ENCODE measurements at regions of chr3 and their contacts with region 1.

Region 1: DNA sequence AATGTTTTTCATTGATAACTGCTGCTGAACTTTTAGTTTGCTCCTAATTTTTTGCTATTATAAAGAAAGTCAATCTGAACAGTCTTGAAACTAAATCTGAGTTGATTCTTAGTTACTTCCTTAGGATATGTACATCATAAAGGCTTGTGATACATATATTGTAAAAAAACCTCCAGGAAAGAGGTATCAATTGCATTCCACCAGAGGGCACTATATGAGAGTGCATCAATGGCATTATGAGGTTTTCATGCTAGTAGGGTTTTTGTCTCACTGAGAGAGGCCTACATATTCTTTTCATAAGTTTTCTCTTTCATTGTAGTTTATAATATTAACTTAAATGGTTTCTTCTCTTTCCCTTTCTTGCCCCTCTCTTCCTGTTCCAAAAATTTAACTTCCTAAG is 46.9 kb downstream of the PIK3R4 start:
- DNase-seq: peak; percentile 44
- H3K4me3 Mint-ChIP-seq: no peak overlapping the region
- H3K27ac Mint-ChIP-seq: no peak overlapping the region
- H3K4me1 Mint-ChIP-seq: no peaks in the 10 kb centered on the region
- H3K27me3 Mint-ChIP-seq: no peaks in the 10 kb centered on the region
- CTCF ChIP-seq: peak; percentile 77

Region 2: DNA sequence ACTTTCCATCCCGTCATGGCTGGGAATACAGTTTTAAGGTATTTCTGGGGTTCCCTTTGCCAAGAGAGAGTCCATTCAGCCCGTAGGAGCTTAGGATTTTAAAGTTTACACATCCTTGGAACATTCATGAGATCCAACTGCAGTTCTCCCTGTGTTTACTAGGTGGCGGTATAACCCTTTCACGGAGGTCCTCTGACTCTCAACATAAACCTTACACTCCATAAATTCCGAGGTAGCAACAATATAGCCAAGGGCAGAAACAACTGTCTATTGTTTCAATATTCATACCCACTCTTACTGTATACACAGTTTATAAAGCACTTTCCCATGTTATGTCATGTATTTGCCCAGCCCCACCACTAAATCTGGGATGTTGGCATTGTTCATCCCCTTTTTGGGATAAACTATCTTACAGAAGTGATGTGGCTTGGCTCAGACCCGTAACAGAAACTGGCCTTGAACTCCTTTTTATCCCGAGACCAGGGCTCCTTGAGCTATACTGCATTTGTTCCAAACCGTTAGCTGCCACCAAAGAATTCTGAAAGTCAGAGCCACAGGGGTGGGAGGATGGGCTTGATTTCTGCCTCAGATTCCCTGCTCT is 423.5 kb before region 1 on chr3:
- CTCF ChIA-PET with region 1: no interaction called
- intact Hi-C with region 1: loop called (anchors 5 kb)
- DNase-seq: peak; percentile 50
- H3K4me3 Mint-ChIP-seq: no peak overlapping the region
- H3K27ac Mint-ChIP-seq: no peak overlapping the region
- H3K4me1 Mint-ChIP-seq: no peaks in the 10 kb centered on the region
- H3K27me3 Mint-ChIP-seq: peaks cover 54% of the 10 kb centered on the region
- CTCF ChIP-seq: peak; percentile 88

Region 3: GRCh38 chr3:130779031-130779430 is 79.3 kb after region 1 on chr3:
- CTCF ChIA-PET with region 1: no interaction called
- intact Hi-C with region 1: no loop called
- DNase-seq: no peak
- H3K4me3 Mint-ChIP-seq: no peak overlapping the region
- H3K27ac Mint-ChIP-seq: no peak overlapping the region
- H3K4me1 Mint-ChIP-seq: peaks cover 38% of the 10 kb centered on the region
- H3K27me3 Mint-ChIP-seq: no peaks in the 10 kb centered on the region
- CTCF ChIP-seq: no peak

Region 4: DNA sequence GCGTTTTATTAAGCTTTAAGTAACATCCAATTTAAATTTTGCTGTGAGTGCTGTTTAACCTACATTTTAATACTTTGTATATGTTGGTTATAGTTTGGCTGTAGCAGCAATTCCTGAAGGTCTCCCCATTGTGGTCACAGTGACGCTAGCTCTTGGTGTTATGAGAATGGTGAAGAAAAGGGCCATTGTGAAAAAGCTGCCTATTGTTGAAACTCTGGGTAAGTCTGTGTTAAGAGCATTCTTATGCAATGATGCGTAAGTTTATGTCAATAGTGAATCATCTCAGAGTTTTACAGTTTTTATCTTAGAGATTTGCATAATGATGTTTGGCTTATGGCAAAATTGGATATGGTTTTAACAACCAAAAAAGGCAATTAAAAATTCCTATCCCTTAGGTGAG is 264.1 kb after region 1 on chr3:
- CTCF ChIA-PET with region 1: no interaction called
- intact Hi-C with region 1: loop called (anchors 5 kb)
- DNase-seq: peak; percentile 72
- H3K4me3 Mint-ChIP-seq: peak overlapping the region; percentile 5
- H3K27ac Mint-ChIP-seq: peak overlapping the region; percentile 94
- H3K4me1 Mint-ChIP-seq: peaks cover 62% of the 10 kb centered on the region
- H3K27me3 Mint-ChIP-seq: no peaks in the 10 kb centered on the region
- CTCF ChIP-seq: no peak

Region 5: DNA sequence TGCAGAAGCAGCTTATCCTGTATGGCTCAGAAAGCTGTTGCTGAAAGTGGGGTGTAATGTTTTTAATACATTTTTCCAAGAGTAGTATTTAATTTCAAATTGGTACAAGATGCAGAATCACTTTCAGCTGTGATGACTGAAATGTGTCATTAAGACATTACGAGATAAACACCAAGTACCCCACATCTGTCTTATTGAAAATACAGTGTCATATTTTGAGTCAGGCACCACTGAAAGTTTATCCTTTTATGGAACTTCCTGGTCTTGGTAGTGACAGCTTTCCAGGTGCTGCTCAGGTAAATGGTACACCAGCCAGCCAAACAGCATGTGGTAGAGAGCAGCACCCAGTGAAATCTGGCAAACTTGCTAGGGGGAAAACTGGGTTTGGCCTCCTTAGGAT is 309.9 kb after region 1 on chr3:
- CTCF ChIA-PET with region 1: no interaction called
- intact Hi-C with region 1: loop called (anchors 5 kb)
- DNase-seq: no peak
- H3K4me3 Mint-ChIP-seq: no peak overlapping the region
- H3K27ac Mint-ChIP-seq: no peak overlapping the region
- H3K4me1 Mint-ChIP-seq: no peaks in the 10 kb centered on the region
- H3K27me3 Mint-ChIP-seq: no peaks in the 10 kb centered on the region
- CTCF ChIP-seq: no peak

Measured in Calu3 (cell line).